ENCODE measurements at regions of chr2 and their contacts with region 1.

Region 1: GRCh38 chr2:15058015-15058720 is 425.7 kb downstream of the LRATD1 start:
- DNase-seq: no peak
- H3K4me3 ChIP-seq: no peak overlapping the region
- H3K27ac ChIP-seq: no peak overlapping the region
- H3K4me1 ChIP-seq: peaks cover 0 to 2% (median 0%) of the 10 kb centered on the region in 4 experiments; a peak in 3 of 7 replicates
- H3K27me3 ChIP-seq: no peaks in the 10 kb centered on the region
- CTCF ChIP-seq: peak; percentile 46 to 73 (median 46)
- EP300 ChIP-seq: no peak
- POLR2A ChIP-seq: no peak
- RAD21 ChIP-seq: peak; percentile 34 to 47; a peak in 2 of 4 replicates

Region 2: GRCh38 chr2:15031745-15032240 is 26.4 kb before region 1 on chr2:
- CTCF ChIA-PET with region 1: interaction called, 10 read pairs
- POLR2A ChIA-PET with region 1: no interaction called
- DNase-seq: no peak
- H3K4me3 ChIP-seq: no peak overlapping the region
- H3K27ac ChIP-seq: no peak overlapping the region
- H3K4me1 ChIP-seq: no peaks in the 10 kb centered on the region
- H3K27me3 ChIP-seq: no peaks in the 10 kb centered on the region
- CTCF ChIP-seq: peak in 2 of 3 experiments; percentile 30 to 42; a peak in 3 of 4 replicates
- EP300 ChIP-seq: no peak
- POLR2A ChIP-seq: no peak
- RAD21 ChIP-seq: peak; percentile 32 to 36; a peak in 3 of 4 replicates

Region 3: DNA sequence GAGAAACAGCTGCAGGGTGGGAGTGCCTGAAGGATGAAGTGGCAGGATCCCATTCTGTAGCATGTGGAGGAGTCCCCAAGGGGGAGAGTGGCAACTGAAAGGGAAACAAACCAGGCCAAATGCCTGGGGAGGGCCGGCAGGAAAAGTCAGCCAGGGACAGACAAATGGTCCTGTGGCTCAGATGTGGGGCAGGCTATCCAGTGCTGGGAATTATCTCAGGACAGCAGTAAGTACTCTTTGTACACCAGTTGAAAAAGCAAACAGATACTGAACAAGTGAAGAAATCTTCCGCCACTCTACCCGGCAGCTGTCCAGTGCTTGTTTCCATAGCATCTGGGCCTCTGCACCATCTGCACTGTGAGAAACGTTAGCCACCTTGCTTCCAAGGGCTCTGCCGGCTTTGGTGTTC is 16.7 kb before region 1 on chr2:
- CTCF ChIA-PET with region 1: interaction called, 82 read pairs
- POLR2A ChIA-PET with region 1: no interaction called
- DNase-seq: no peak
- H3K4me3 ChIP-seq: no peak overlapping the region
- H3K27ac ChIP-seq: no peak overlapping the region
- H3K4me1 ChIP-seq: peaks cover 3 to 13% (median 10%) of the 10 kb centered on the region in 4 experiments
- H3K27me3 ChIP-seq: no peaks in the 10 kb centered on the region
- CTCF ChIP-seq: no peak
- EP300 ChIP-seq: no peak
- POLR2A ChIP-seq: no peak
- RAD21 ChIP-seq: no peak

Region 4: GRCh38 chr2:15069149-15069548 is 11.0 kb after region 1 on chr2:
- CTCF ChIA-PET with region 1: interaction called, 28 read pairs
- POLR2A ChIA-PET with region 1: no interaction called
- DNase-seq: no peak
- H3K4me3 ChIP-seq: no peak overlapping the region
- H3K27ac ChIP-seq: no peak overlapping the region
- H3K4me1 ChIP-seq: peaks cover 0 to 5% (median 0%) of the 10 kb centered on the region in 4 experiments; a peak in 3 of 7 replicates
- H3K27me3 ChIP-seq: no peaks in the 10 kb centered on the region
- CTCF ChIP-seq: no peak
- EP300 ChIP-seq: no peak
- POLR2A ChIP-seq: no peak
- RAD21 ChIP-seq: no peak

Region 5: DNA sequence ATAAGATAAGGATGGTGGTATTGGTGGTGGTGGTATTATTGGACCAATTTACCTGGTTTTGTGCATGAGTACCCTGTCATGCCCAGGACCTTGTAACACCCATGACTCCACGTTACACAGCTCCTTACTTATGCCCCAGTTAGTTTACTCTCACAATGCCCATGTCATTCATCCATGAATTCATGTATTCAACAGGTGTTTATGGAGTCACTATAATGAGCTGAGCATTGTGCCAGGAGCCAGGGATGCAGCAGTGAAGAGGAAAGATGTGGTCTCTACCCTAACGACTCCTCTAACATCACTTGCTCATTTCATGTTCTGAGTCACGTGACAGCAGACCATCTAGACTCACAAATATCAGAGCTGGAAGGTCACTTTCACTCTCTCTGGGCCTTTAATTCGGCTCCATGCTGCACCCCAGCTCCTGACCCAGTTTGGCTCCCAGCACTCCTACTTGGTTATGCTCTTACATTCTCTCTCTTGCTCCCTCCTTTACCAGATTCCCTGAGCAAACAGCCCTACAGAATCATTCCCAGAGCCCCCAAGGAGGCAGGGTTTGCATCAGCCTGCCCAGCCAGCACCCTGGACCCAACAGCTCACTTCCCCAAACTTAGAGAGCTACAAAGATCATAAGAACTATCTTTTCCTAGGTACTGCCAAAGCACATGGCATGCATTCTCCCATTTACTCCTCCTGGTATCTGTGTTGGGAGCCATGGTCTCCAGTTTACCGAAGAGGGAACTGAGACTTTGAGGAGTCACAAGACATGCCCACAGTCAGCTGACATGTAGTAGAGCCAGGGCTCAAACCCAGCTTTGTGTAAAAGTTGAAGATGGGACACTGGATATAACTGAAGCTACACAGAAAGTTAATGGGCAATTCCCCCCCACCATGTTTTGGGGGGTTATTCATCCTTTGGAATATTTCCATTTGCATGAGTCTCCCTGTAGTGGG is 24.2 kb after region 1 on chr2:
- CTCF ChIA-PET with region 1: interaction called, 12 read pairs
- POLR2A ChIA-PET with region 1: no interaction called
- DNase-seq: no peak
- H3K4me3 ChIP-seq: no peak overlapping the region
- H3K27ac ChIP-seq: no peak overlapping the region
- H3K4me1 ChIP-seq: no peaks in the 10 kb centered on the region
- H3K27me3 ChIP-seq: no peaks in the 10 kb centered on the region
- CTCF ChIP-seq: no peak
- EP300 ChIP-seq: no peak
- POLR2A ChIP-seq: no peak
- RAD21 ChIP-seq: no peak

Region 6: DNA sequence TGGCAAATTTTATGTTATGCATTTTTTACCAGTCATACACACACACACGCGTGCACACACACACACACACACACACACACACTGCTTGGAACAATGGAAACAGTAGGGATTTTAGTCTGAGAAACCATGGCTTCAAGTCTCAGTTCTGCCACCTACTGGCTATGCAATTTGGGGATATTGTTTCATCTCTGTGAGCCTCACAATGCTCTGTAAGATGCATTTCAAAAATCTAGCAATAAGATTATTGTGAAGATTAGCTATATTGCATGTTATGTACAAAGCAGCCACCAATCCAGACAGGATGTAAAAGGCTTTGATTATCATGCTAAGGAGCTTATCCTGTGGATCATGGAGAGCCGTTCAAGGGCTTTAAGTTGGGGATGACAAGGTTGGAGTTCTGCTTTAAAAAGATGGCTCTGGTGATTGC is 101.6 kb after region 1 on chr2:
- CTCF ChIA-PET with region 1: interaction called, 10 read pairs
- POLR2A ChIA-PET with region 1: no interaction called
- DNase-seq: no peak
- H3K4me3 ChIP-seq: no peak overlapping the region
- H3K27ac ChIP-seq: no peak overlapping the region
- H3K4me1 ChIP-seq: peaks cover 2 to 20% (median 11%) of the 10 kb centered on the region in 4 experiments
- H3K27me3 ChIP-seq: no peaks in the 10 kb centered on the region
- CTCF ChIP-seq: peak in 2 of 3 experiments; percentile 46 to 79; a peak in 3 of 4 replicates
- EP300 ChIP-seq: no peak
- POLR2A ChIP-seq: no peak
- RAD21 ChIP-seq: peak; percentile 67 to 74

Measured in H1 (cell line).